ENCODE measurements at regions of chr10 and their contacts with region 1.

Region 1: DNA sequence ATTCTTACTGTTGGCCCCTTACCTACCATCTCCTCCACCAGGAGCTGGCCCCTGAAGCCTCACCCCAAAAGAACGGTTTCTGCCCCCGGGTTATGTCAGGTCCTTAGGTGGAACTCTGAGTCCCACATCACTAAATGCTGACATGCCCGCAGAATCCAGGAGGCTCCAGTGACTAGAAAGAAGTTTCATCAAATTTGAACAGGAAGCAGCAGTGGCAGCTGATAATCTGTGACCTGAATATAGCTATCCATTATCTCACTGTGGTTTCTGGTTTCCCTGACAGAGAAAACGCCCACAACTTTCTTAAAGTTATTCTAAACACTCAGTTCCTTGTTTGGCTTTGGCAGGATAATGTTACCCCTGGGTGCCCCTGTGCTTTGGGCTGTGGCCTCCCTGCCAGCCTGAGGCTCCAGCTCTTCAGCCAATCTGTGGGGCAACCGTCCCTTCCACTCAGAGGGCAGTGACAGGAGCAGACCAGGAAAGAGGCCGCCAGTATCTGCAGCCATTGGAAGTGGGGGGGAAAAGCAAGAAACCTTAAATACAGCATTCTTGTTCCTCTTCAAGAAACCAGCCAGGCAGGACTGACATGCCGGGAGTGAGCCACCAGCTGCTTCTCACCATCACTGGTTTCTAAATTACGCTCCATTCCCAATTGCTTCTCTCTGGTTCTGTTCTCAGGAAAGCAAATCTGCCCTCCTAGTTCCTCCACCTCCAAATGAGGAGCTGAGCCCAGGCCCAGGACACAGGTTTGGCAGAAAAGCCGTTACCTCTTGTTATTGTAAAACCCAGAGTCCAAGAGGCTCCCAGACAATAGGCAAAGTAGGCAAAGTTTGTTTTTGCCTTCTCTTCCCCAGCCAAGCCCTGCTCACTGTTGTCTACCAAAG is 41.2 kb upstream of the VCL start:
- DNase-seq: no peak
- ATAC-seq: peak; percentile 40
- H3K4me3 ChIP-seq: no peak overlapping the region
- H3K27ac ChIP-seq: peak overlapping the region; percentile 44
- H3K4me1 ChIP-seq: peaks cover 15 to 31% of the 10 kb centered on the region in 2 experiments
- H3K27me3 ChIP-seq: no peaks in the 10 kb centered on the region
- CTCF ChIP-seq: no peak
- POLR2A ChIP-seq: no peak
- RAD21 ChIP-seq: no peak

Region 2: GRCh38 chr10:73940634-73941221 is 16.0 kb before region 1 on chr10:
- CTCF ChIA-PET with region 1: interaction called, 12 read pairs
- POLR2A ChIA-PET with region 1: interaction called, 7 read pairs
- RAD21 ChIA-PET with region 1: interaction called in 1 of 2 experiments, 3 read pairs
- intact Hi-C with region 1: no loop called
- DNase-seq: peak; percentile 37
- ATAC-seq: peak; percentile 97
- H3K4me3 ChIP-seq: peak overlapping the region in 1 of 2 experiments; percentile 31; a peak in 2 of 4 replicates
- H3K27ac ChIP-seq: peak overlapping the region; percentile 7; the same call in 1 of the 2 replicates
- H3K4me1 ChIP-seq: peaks cover 11 to 43% of the 10 kb centered on the region in 2 experiments
- H3K27me3 ChIP-seq: no peaks in the 10 kb centered on the region
- CTCF ChIP-seq: peak; percentile 90 to 95 (median 93); a peak in 5 of 6 replicates
- POLR2A ChIP-seq: no peak
- RAD21 ChIP-seq: peak; percentile 100

Region 3: GRCh38 chr10:73974309-73974946 is 17.7 kb after region 1 on chr10:
- CTCF ChIA-PET with region 1: no interaction called
- POLR2A ChIA-PET with region 1: no interaction called
- RAD21 ChIA-PET with region 1: no interaction called
- intact Hi-C with region 1: no loop called
- DNase-seq: no peak
- ATAC-seq: no peak
- H3K4me3 ChIP-seq: no peak overlapping the region
- H3K27ac ChIP-seq: no peak overlapping the region
- H3K4me1 ChIP-seq: peaks cover 0 to 9% of the 10 kb centered on the region in 2 experiments; a peak in 2 of 4 replicates
- H3K27me3 ChIP-seq: no peaks in the 10 kb centered on the region
- CTCF ChIP-seq: no peak
- POLR2A ChIP-seq: peak; percentile 2
- RAD21 ChIP-seq: no peak

Region 4: GRCh38 chr10:74058658-74059057 is 101.9 kb after region 1 on chr10:
- CTCF ChIA-PET with region 1: no interaction called
- POLR2A ChIA-PET with region 1: no interaction called
- RAD21 ChIA-PET with region 1: no interaction called
- intact Hi-C with region 1: no loop called
- DNase-seq: peak; percentile 18
- ATAC-seq: no peak
- H3K4me3 ChIP-seq: no peak overlapping the region
- H3K27ac ChIP-seq: no peak overlapping the region
- H3K4me1 ChIP-seq: peaks cover 27 to 49% of the 10 kb centered on the region in 2 experiments
- H3K27me3 ChIP-seq: no peaks in the 10 kb centered on the region
- CTCF ChIP-seq: no peak
- POLR2A ChIP-seq: no peak
- RAD21 ChIP-seq: peak; percentile 54; the same call in 1 of the 2 replicates

Region 5: DNA sequence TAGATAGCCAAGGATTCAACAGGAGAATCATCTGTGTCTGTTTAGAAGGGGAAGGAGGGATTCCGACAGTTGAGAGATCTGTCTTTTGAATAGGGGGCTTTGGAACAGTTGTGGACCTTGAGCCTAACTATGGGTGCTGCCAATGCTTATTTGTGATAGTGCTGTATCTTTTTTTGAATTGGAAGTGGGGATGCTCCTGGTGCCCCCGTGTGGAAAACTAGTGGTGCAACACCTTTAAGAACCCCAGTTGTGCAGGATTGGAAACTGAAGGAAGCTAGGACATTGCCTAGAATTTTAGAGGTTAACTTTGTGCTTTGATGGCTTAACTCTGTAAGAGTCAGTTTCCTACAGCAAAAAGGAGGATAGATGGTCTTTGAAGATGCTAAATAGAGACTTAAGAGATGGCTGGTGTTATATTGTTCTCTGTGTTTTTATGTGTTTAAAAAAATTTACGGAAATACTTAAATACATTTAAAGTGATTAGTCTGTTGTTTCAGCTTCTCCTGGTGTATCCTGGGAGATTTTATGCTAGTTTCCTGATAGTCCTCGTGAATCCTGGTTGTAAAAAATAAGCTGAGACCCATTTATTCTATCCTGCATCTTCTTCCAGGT is 124.6 kb after region 1 on chr10:
- CTCF ChIA-PET with region 1: no interaction called
- POLR2A ChIA-PET with region 1: no interaction called
- RAD21 ChIA-PET with region 1: no interaction called
- intact Hi-C with region 1: loop called (anchors 5 kb)
- DNase-seq: peak; percentile 43
- ATAC-seq: peak; percentile 82
- H3K4me3 ChIP-seq: no peak overlapping the region
- H3K27ac ChIP-seq: peak overlapping the region; percentile 64; the same call in 1 of the 2 replicates
- H3K4me1 ChIP-seq: peaks cover 32 to 48% of the 10 kb centered on the region in 2 experiments
- H3K27me3 ChIP-seq: no peaks in the 10 kb centered on the region
- CTCF ChIP-seq: peak; percentile 59 to 81 (median 80); a peak in 5 of 6 replicates
- POLR2A ChIP-seq: no peak
- RAD21 ChIP-seq: peak; percentile 84